PC-9 (cell line): ENCODE measurements at regions of chr3 and their contacts with region 1.

Region 1: GRCh38 chr3:72722930-72723726 is 125.1 kb downstream of the SHQ1 start:
- DNase-seq: peak; percentile 89 to 93
- H3K4me3 ChIP-seq: no peak overlapping the region; the same call in 1 of the 2 replicates
- H3K27ac ChIP-seq: peak overlapping the region; percentile 97
- H3K4me1 ChIP-seq: peaks cover 41% of the 10 kb centered on the region
- H3K27me3 ChIP-seq: no peaks in the 10 kb centered on the region
- CTCF ChIP-seq: no peak

Region 2: GRCh38 chr3:72447059-72447946 is 275.8 kb before region 1 on chr3:
- CTCF ChIA-PET with region 1: no interaction called
- POLR2A ChIA-PET with region 1: no interaction called
- intact Hi-C with region 1: loop called (anchors 5 kb)
- DNase-seq: peak; percentile 50 to 93
- H3K4me3 ChIP-seq: peak overlapping the region; percentile 66
- H3K27ac ChIP-seq: peak overlapping the region; percentile 61; the same call in 1 of the 2 replicates
- H3K4me1 ChIP-seq: peaks cover 23% of the 10 kb centered on the region
- H3K27me3 ChIP-seq: no peaks in the 10 kb centered on the region
- CTCF ChIP-seq: no peak

Region 3: DNA sequence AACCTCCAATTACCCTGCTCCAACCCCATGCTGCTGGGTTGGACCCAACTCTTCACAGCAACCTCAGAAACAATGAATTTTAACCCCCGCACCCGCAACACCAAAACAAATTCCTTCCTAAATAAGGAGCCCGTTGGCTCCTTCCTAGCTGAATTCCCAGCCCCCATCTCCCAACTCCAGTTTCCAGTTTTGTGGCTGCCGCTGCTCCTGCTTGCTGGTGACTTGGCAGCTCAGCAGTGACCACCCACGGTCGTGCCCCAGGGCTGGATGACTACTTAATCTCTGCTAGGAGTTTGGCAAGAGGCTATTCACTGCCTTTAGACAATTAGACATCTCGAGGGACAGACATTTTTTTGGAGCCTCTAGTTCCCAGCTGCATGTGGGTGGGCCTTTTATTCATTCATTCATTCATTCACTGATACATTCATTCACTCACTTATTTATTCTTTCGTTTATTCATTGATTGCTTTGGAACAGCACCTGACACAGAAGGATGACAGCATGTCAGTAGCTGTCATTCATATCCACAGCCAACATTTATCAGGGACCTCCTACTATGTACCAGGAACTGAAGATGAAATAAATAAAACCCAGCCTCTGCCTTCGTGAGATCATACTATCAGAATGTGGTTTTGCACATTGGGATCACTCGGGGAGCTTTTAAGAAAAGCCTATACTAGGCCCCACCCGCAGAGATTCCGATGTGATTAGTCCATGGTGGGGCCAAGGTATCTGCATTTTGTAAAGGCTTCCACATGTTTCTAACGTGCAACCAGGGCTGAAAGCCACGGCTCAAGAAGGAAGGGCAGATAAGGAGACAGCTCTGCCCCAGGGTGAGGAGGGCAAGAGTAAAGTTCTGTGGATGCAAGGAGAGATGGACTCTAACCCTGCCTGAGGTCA is 131.4 kb before region 1 on chr3:
- CTCF ChIA-PET with region 1: no interaction called
- POLR2A ChIA-PET with region 1: no interaction called
- intact Hi-C with region 1: loop called (anchors 5 kb)
- DNase-seq: peak; percentile 81 to 82
- H3K4me3 ChIP-seq: no peak overlapping the region
- H3K27ac ChIP-seq: peak overlapping the region; percentile 74
- H3K4me1 ChIP-seq: peaks cover 18% of the 10 kb centered on the region
- H3K27me3 ChIP-seq: no peaks in the 10 kb centered on the region
- CTCF ChIP-seq: no peak

Region 4: GRCh38 chr3:72655723-72656122 is 67.4 kb before region 1 on chr3:
- CTCF ChIA-PET with region 1: interaction called, 11 read pairs
- POLR2A ChIA-PET with region 1: interaction called, 4 read pairs
- intact Hi-C with region 1: loop called (anchors 2 kb)
- DNase-seq: no peak
- H3K4me3 ChIP-seq: no peak overlapping the region
- H3K27ac ChIP-seq: no peak overlapping the region
- H3K4me1 ChIP-seq: peaks cover 11% of the 10 kb centered on the region
- H3K27me3 ChIP-seq: no peaks in the 10 kb centered on the region
- CTCF ChIP-seq: no peak; the same call in 1 of the 2 replicates

Region 5: DNA sequence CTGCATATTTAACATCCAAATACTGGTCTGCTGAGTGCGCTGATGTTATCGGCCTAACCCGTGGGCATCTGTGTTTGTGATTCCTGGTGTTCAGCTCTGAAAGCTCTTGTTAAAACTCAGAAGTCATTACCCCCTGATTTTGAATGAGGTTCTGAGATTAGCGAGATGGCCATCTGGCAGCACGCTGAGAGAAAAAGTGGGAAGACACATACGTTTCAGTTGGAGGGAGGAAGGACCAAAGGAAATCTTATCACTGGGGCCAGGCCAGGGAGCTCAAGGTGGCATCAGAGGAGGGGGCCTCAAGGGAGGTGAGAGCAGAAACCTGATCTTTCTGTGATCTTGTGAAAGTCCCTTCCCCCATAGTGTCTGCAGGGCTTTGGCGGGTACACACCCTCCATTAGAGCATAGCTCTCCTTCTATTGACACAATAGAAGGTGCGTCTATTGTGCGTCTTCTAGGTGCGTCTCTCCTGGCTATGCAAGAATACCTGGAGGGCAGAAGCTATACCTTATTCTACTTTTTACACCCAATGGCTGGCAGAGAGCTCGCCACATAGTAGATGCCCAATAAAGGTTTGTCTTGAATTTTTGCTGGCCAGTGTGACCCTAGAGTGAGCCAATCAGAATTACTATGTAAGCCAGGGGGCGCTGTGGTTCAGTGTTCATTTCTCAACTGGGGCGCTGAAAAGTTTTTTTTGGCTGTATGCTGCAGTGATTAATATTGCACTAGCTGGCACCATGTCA is 57.3 kb before region 1 on chr3:
- CTCF ChIA-PET with region 1: no interaction called
- POLR2A ChIA-PET with region 1: no interaction called
- intact Hi-C with region 1: loop called (anchors 1 kb)
- DNase-seq: peak in 1 of 2 experiments; percentile 44
- H3K4me3 ChIP-seq: no peak overlapping the region
- H3K27ac ChIP-seq: no peak overlapping the region
- H3K4me1 ChIP-seq: peaks cover under 1% of the 10 kb centered on the region
- H3K27me3 ChIP-seq: no peaks in the 10 kb centered on the region
- CTCF ChIP-seq: peak; percentile 66

Region 6: GRCh38 chr3:72745146-72745999 is 22.2 kb after region 1 on chr3:
- CTCF ChIA-PET with region 1: no interaction called
- POLR2A ChIA-PET with region 1: no interaction called
- intact Hi-C with region 1: no loop called
- DNase-seq: no peak
- H3K4me3 ChIP-seq: no peak overlapping the region
- H3K27ac ChIP-seq: no peak overlapping the region
- H3K4me1 ChIP-seq: peaks cover 8% of the 10 kb centered on the region; the same call in 1 of the 2 replicates
- H3K27me3 ChIP-seq: no peaks in the 10 kb centered on the region
- CTCF ChIP-seq: no peak